Ascending aorta (tissue), 2 donors: ENCODE measurements at regions of chr2 and their contacts with region 1.

Region 1: GRCh38 chr2:85750587-85751575 is 2.9 kb upstream of the ATOH8 start:
- DNase-seq: peak in 1 of 2 donors; percentile 89
- H3K4me3 ChIP-seq: peak overlapping the region in 1 of 2 donors; percentile 19
- H3K27ac ChIP-seq: peak overlapping the region; percentile 97 to 98
- H3K4me1 ChIP-seq: peaks cover 11 to 46% of the 10 kb centered on the region in 2 donors
- H3K27me3 ChIP-seq: no peaks in the 10 kb centered on the region
- CTCF ChIP-seq: peak; percentile 79 to 90 (median 84)

Region 2: GRCh38 chr2:85728883-85729824 is 21.7 kb before region 1 on chr2:
- intact Hi-C with region 1: loop called (anchors 1 kb)
- DNase-seq: peak in 1 of 2 donors; percentile 95
- H3K4me3 ChIP-seq: no peak overlapping the region
- H3K27ac ChIP-seq: peak overlapping the region in 1 of 2 donors; percentile 37
- H3K4me1 ChIP-seq: peaks cover 0 to 11% of the 10 kb centered on the region in 2 donors
- H3K27me3 ChIP-seq: no peaks in the 10 kb centered on the region
- CTCF ChIP-seq: peak; percentile 95 to 99 (median 97)

Region 3: DNA sequence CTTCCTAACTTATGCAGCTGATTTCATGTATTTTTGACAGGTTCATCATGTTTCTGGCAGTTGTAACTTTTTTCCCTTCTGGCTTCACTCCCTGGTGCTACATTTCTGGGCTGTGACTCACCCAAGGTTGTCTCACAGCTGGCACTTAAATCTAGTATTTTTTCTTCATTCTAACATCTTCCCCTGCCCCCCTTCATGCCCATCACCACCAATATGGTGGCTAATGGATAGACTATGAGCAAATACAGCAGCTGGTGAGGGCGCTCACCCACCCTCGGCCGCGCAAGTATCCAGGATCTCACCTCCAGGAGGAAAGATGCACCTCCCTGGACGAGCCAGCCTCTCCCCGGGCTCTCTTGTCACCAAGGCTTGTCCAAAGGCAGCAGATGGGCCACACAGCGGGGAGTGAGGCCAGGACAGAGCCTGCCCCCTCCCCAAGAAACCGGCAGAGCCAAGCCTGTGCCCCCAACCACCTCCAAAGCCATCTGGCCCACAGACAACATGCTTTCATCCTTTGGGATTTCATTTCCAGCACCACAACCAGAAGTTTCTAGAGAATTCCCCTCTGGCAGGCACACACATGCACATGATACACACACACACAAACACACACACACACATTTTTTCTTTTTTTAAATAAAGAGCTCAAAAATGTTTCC is 42.0 kb after region 1 on chr2:
- intact Hi-C with region 1: loop called (anchors 2 kb)
- DNase-seq: peak in 1 of 2 donors; percentile 86
- H3K4me3 ChIP-seq: no peak overlapping the region
- H3K27ac ChIP-seq: peak overlapping the region; percentile 87 to 91
- H3K4me1 ChIP-seq: peaks cover 44 to 80% of the 10 kb centered on the region in 2 donors
- H3K27me3 ChIP-seq: no peaks in the 10 kb centered on the region
- CTCF ChIP-seq: no peak